ENCODE measurements at regions of chr14 and their contacts with region 1.

Region 1: GRCh38 chr14:54773171-54773975 is 129.3 kb downstream of the GCH1 start:
- DNase-seq: peak; percentile 13 to 77 (median 54)
- ATAC-seq: peak; percentile 58 to 80 (median 72)
- H3K4me3 ChIP-seq: no peak overlapping the region
- H3K4me3 Mint-ChIP-seq: peak overlapping the region; percentile 49 to 64 (median 62)
- H3K27ac ChIP-seq: peak overlapping the region; percentile 40
- H3K27ac Mint-ChIP-seq: peak overlapping the region; percentile 82 to 83
- H3K4me1 ChIP-seq: peaks cover 5 to 27% of the 10 kb centered on the region in 2 experiments
- H3K4me1 Mint-ChIP-seq: peaks cover 29 to 33% (median 31%) of the 10 kb centered on the region in 3 donors
- H3K27me3 ChIP-seq: peaks cover 0 to 19% of the 10 kb centered on the region in 2 experiments
- H3K27me3 Mint-ChIP-seq: peaks cover 4% of the 10 kb centered on the region in 2 donors

Region 2: GRCh38 chr14:54814076-54814475 is 40.7 kb after region 1 on chr14:
- CTCF ChIA-PET with region 1: interaction called in 1 of 2 experiments, 10 read pairs
- POLR2A ChIA-PET with region 1: no interaction called
- DNase-seq: peak in 1 of 35 experiments; percentile 8
- ATAC-seq: no peak
- H3K4me3 ChIP-seq: no peak overlapping the region
- H3K4me3 Mint-ChIP-seq: no peak overlapping the region
- H3K27ac ChIP-seq: no peak overlapping the region
- H3K27ac Mint-ChIP-seq: no peak overlapping the region
- H3K4me1 ChIP-seq: no peaks in the 10 kb centered on the region
- H3K4me1 Mint-ChIP-seq: no peaks in the 10 kb centered on the region
- H3K27me3 ChIP-seq: no peaks in the 10 kb centered on the region
- H3K27me3 Mint-ChIP-seq: peaks cover 0 to 8% of the 10 kb centered on the region in 2 donors

Measured in T-cell (primary cell).